Breast epithelium (tissue), 4 donors: ENCODE measurements at regions of chr10 and their contacts with region 1.

Region 1: DNA sequence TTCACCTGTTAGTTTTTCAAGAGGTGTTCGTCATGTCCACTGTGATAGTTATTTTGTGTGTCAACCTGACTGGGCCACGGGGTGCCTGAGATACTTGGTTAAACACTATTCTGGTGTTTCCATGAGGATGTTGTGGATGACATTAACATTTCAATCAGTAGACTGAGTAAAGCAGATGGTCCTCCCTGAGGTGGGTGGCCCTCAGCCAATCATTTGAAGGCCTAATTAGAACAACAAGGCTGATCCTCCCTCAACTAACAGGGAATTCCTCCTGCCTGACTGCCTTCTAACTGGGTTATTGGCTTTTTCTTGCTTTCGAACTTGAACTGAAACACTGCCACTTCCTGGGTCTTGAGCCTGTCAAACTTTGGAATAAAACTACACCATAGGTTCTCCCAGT is 75.8 kb downstream of the ENO4 start:
- DNase-seq: no peak
- H3K4me3 ChIP-seq: no peak overlapping the region
- H3K27ac ChIP-seq: no peak overlapping the region
- H3K4me1 ChIP-seq: no peaks in the 10 kb centered on the region
- H3K27me3 ChIP-seq: no peaks in the 10 kb centered on the region
- CTCF ChIP-seq: no peak
- POLR2A ChIP-seq: no peak

Region 2: GRCh38 chr10:117900280-117900679 is 975.2 kb after region 1 on chr10:
- intact Hi-C with region 1: loop called (anchors 10 kb)
- DNase-seq: no peak
- H3K4me3 ChIP-seq: no peak overlapping the region
- H3K27ac ChIP-seq: no peak overlapping the region
- H3K4me1 ChIP-seq: no peaks in the 10 kb centered on the region
- H3K27me3 ChIP-seq: peaks cover 0 to 8% of the 10 kb centered on the region in 2 donors
- CTCF ChIP-seq: no peak
- POLR2A ChIP-seq: no peak

Region 3: DNA sequence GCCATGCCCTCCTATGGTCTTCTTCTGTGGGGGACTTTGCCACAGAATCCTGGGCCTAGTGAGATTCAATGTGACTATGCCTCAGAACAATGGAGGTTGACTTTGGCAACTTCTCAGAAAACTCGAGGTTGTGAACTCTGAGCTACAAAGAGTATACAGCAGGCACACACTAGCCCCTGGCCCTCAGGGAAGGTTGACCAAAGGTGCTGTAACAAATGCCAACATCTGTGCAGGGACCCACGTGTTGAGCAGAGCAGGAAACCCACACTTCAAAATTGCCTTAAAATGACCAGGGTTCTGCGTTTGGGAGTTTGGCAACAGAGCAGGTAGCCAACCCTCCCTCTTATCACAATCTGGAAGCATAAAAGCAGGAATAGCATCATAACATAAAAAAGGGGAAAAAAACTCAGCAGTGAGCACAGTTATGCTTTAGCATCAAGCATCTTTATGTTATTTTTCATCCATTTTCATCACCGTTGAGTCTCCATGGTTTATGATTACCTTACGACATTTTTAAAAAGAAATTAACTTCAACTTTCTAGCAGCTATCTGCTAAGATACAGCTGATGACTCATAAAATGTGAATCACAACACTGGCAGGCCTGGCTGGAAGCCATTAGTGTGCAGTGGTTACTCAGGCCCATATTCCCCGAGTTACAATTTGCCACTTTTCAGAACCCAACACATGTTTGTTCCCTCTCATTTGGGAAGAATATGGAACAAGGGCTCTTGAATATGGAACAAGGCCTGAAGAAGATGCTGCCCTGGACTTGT is 1659.3 kb after region 1 on chr10:
- intact Hi-C with region 1: no loop called
- DNase-seq: no peak
- H3K4me3 ChIP-seq: no peak overlapping the region
- H3K27ac ChIP-seq: no peak overlapping the region
- H3K4me1 ChIP-seq: no peaks in the 10 kb centered on the region
- H3K27me3 ChIP-seq: no peaks in the 10 kb centered on the region
- CTCF ChIP-seq: no peak
- POLR2A ChIP-seq: no peak